OCI-LY7 (cell line): ENCODE measurements at regions of chr2 and their contacts with region 1.

Region 1: DNA sequence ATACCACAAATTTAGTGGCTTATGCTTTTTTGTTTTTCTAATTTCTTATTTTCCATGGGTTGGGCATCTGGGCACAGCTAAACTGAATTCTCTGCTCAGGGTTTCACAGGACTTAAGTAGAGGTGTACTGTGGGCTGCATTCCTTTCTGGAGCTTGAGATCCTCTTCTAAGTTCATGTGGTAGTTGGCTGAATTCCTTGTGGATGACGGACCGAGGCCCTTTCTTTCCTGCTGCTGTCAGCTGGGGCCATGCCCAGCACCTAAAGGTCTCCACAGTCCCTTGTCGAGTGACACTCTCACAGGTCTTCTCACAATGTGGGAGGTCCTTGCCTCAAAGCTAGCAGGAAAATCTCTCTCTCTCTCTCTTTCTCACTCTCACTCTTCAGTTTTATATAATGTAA is 433.5 kb upstream of the LRATD1 start:
- DNase-seq: no peak
- H3K4me3 ChIP-seq: no peak overlapping the region
- H3K27ac ChIP-seq: no peak overlapping the region
- H3K4me1 ChIP-seq: no peaks in the 10 kb centered on the region
- CTCF ChIP-seq: no peak

Region 2: DNA sequence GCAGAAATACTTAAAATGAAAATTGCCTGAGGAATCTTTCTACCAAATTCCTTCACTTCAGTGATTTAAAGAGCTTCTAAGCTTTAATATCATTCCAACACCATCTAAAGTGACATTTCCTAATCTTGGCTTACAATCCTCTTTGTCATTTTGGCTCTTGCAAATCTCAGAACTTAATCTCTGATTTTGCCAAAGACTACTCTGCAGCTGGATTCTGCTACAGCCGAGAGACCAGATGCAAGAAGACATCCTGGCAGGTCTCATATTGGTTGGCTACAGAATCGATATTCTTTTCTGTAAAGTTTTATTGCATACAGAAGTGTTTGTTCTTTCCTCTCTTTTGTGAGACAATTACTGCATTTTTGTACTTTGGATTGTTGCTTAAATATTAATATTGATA is 283.0 kb before region 1 on chr2:
- CTCF ChIA-PET with region 1: no interaction called
- POLR2A ChIA-PET with region 1: no interaction called
- intact Hi-C with region 1: no loop called
- DNase-seq: no peak
- H3K4me3 ChIP-seq: no peak overlapping the region
- H3K27ac ChIP-seq: no peak overlapping the region
- H3K4me1 ChIP-seq: no peaks in the 10 kb centered on the region
- CTCF ChIP-seq: no peak

Region 3: DNA sequence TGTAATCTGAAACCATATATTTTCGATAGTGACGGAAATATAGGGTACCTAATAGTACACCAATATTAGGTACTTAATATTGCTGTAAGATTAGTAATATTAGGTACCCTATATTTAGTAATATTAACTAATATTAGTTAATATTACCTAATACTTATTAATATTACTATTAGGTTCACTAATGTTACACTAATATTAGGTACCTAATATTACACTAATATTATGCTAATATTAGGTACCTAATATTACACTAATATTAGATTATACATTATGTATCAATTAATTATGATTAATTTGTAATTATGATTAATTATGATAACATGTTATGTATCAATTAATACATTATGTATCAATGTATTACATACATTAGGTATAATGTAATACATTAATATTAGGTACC is 84.8 kb before region 1 on chr2:
- CTCF ChIA-PET with region 1: no interaction called
- POLR2A ChIA-PET with region 1: interaction called, 11 read pairs
- intact Hi-C with region 1: no loop called
- DNase-seq: no peak
- H3K4me3 ChIP-seq: no peak overlapping the region
- H3K27ac ChIP-seq: no peak overlapping the region
- H3K4me1 ChIP-seq: no peaks in the 10 kb centered on the region
- CTCF ChIP-seq: no peak

Region 4: GRCh38 chr2:14220101-14220500 is 21.1 kb after region 1 on chr2:
- CTCF ChIA-PET with region 1: no interaction called
- POLR2A ChIA-PET with region 1: no interaction called
- intact Hi-C with region 1: no loop called
- DNase-seq: no peak
- H3K4me3 ChIP-seq: no peak overlapping the region
- H3K27ac ChIP-seq: no peak overlapping the region
- H3K4me1 ChIP-seq: no peaks in the 10 kb centered on the region
- CTCF ChIP-seq: no peak

Region 5: GRCh38 chr2:14231391-14231898 is 32.4 kb after region 1 on chr2:
- CTCF ChIA-PET with region 1: no interaction called
- POLR2A ChIA-PET with region 1: no interaction called
- intact Hi-C with region 1: no loop called
- DNase-seq: no peak
- H3K4me3 ChIP-seq: no peak overlapping the region
- H3K27ac ChIP-seq: no peak overlapping the region
- H3K4me1 ChIP-seq: no peaks in the 10 kb centered on the region
- CTCF ChIP-seq: no peak